ENCODE measurements at regions of chr17 and their contacts with region 1.

Region 1: GRCh38 chr17:75250009-75250471 is 11.4 kb downstream of the GGA3 start:
- DNase-seq: peak; percentile 64
- H3K4me3 Mint-ChIP-seq: peak overlapping the region; percentile 77
- H3K27ac Mint-ChIP-seq: peak overlapping the region; percentile 92
- H3K4me1 Mint-ChIP-seq: peaks cover 63% of the 10 kb centered on the region
- H3K27me3 Mint-ChIP-seq: no peaks in the 10 kb centered on the region

Region 2: DNA sequence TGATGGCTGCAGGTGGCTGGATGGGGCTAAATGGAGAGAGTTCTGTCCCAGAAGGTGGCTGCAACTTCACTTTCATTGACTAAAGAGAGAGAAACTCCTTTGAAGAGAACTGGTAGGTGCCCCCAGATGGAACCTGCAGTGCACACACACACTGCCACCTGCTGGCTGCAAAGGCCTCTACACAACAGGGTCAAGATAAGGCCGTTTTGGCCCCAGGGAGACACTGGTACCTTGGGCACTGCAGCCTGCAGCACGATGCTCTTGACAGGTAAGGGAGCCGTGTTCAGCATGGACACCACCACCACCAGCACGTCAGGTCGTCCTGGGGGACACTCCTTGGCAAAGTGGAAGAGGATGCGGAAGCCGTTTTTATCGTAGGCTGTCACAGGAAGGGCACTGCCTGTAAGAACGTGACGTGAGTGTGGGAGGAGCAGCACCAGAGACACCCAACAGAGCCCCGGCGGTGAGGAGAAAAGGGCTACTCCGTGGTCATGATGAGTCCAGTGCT is 11.3 kb before region 1 on chr17:
- intact Hi-C with region 1: loop called (anchors 1 kb)
- DNase-seq: peak; percentile 35
- H3K4me3 Mint-ChIP-seq: peak overlapping the region; percentile 38
- H3K27ac Mint-ChIP-seq: peak overlapping the region; percentile 76
- H3K4me1 Mint-ChIP-seq: peaks cover 35% of the 10 kb centered on the region
- H3K27me3 Mint-ChIP-seq: no peaks in the 10 kb centered on the region

Region 3: GRCh38 chr17:75295201-75296158 is 45.4 kb after region 1 on chr17:
- intact Hi-C with region 1: loop called (anchors 2 kb)
- DNase-seq: peak; percentile 49
- H3K4me3 Mint-ChIP-seq: peak overlapping the region; percentile 49
- H3K27ac Mint-ChIP-seq: peak overlapping the region; percentile 96
- H3K4me1 Mint-ChIP-seq: peaks cover 24% of the 10 kb centered on the region
- H3K27me3 Mint-ChIP-seq: no peaks in the 10 kb centered on the region

Measured in activated T-helper 1 cell treated with anti-CD3 and anti-CD28 coated beads, Interleukin-12 subunit alpha, Interleukin-12 subunit beta, Interleukin-2, Interleukin-4 antibody, amounts not matched to agents 30 ng/mL and 10 ng/mL and 1 ng/mL, durations not matched to agents 14 hours and 24 hours and 36 hours (primary cell).